Ascending aorta (tissue), 2 donors: ENCODE measurements at regions of chr2 and their contacts with region 1.

Region 1: GRCh38 chr2:235746257-235747084 is 252.6 kb downstream of the AGAP1 start:
- DNase-seq: peak in 1 of 2 donors; percentile 74
- H3K4me3 ChIP-seq: no peak overlapping the region
- H3K27ac ChIP-seq: no peak overlapping the region
- H3K4me1 ChIP-seq: no peaks in the 10 kb centered on the region
- H3K27me3 ChIP-seq: no peaks in the 10 kb centered on the region
- CTCF ChIP-seq: peak; percentile 74 to 80 (median 80)

Region 2: GRCh38 chr2:234544659-234545611 is 1201.5 kb before region 1 on chr2:
- intact Hi-C with region 1: loop called (anchors 10 kb)
- DNase-seq: peak in 1 of 2 donors; percentile 66
- H3K4me3 ChIP-seq: no peak overlapping the region
- H3K27ac ChIP-seq: no peak overlapping the region
- H3K4me1 ChIP-seq: peaks cover 0 to 2% of the 10 kb centered on the region in 2 donors
- H3K27me3 ChIP-seq: no peaks in the 10 kb centered on the region
- CTCF ChIP-seq: peak; percentile 60 to 87 (median 86)

Region 3: DNA sequence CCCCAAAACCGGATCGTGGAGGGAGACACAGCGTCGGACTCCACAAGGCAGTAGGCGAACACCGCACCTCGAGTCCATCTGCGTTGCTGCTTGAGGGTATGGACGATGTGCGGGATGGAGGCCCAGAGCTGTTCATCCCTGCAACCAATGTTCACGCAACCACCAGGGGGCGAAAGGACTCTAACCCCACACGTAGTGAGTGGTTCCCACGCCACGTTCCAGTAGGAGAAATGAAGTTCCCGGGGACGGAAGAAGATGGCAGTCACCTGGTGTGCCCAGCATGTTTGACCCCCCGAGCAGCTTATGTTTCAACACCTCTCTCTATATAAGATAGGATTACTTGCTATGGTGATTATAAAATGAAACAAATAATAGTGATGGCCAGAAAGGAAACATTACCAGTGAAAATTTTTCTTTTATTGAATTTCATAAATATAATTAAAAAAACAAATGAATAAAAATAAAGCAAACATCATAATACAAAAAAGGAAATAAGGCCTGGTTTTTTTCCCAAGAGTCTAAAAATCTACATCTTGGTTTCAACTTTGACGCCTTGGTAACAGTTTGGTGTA is 610.4 kb before region 1 on chr2:
- intact Hi-C with region 1: loop called (anchors 10 kb)
- DNase-seq: peak in 1 of 2 donors; percentile 69
- H3K4me3 ChIP-seq: no peak overlapping the region
- H3K27ac ChIP-seq: no peak overlapping the region
- H3K4me1 ChIP-seq: no peaks in the 10 kb centered on the region
- H3K27me3 ChIP-seq: no peaks in the 10 kb centered on the region
- CTCF ChIP-seq: peak in 2 of 3 experiments; percentile 14 to 49

Region 4: GRCh38 chr2:235255693-235256092 is 490.8 kb before region 1 on chr2:
- intact Hi-C with region 1: no loop called
- DNase-seq: no peak
- H3K4me3 ChIP-seq: no peak overlapping the region
- H3K27ac ChIP-seq: no peak overlapping the region
- H3K4me1 ChIP-seq: no peaks in the 10 kb centered on the region
- H3K27me3 ChIP-seq: no peaks in the 10 kb centered on the region
- CTCF ChIP-seq: no peak

Region 5: GRCh38 chr2:235669269-235669831 is 77.1 kb before region 1 on chr2:
- intact Hi-C with region 1: loop called (anchors 5 kb)
- DNase-seq: peak in 1 of 2 donors; percentile 71
- H3K4me3 ChIP-seq: peak overlapping the region; percentile 68 to 78
- H3K27ac ChIP-seq: no peak overlapping the region
- H3K4me1 ChIP-seq: peaks cover 9 to 10% of the 10 kb centered on the region in 2 donors
- H3K27me3 ChIP-seq: no peaks in the 10 kb centered on the region
- CTCF ChIP-seq: no peak

Region 6: DNA sequence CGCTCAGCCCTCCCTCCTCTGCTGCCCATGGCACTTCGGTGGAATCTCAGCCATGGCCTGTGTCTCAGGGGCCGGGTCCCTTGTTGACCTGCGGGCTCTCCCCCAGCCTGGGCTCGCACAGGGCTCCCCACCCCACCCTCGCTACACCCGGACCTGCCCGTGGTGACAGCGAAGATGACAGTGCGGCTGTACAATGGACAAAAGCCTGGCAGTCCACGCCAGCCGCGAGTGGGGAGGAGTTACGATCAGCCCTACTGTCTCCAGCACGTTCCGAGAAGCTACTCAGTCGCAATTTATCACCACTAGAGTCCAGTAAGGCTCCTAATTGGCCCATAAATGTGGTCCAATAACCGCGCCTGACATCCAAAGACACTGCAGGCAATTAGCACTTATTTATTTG is 390.1 kb after region 1 on chr2:
- intact Hi-C with region 1: no loop called
- DNase-seq: no peak
- H3K4me3 ChIP-seq: no peak overlapping the region
- H3K27ac ChIP-seq: no peak overlapping the region
- H3K4me1 ChIP-seq: no peaks in the 10 kb centered on the region
- H3K27me3 ChIP-seq: no peaks in the 10 kb centered on the region
- CTCF ChIP-seq: no peak

Region 7: DNA sequence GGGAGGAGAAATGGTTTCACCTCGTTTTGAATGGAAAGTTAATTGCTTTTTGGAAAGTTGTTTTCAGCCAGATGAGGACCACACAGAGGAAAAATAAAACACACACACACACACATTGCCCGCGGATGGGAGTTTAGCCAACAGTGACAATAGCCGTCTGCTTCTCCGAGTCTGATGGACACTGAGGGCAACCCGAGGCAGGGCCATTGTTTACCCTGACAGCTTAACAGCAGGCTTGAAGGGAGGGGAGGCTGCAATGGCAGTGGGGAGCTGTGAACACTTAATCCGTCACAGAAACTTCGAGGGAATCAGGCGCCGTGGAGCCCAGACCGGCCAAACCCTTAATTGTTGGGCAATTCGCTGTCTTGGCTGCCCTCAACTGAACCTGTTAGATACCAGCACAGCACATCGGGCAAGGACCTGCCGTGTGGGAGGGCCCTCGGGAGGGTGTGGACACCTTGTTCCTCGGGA is 969.1 kb after region 1 on chr2:
- intact Hi-C with region 1: no loop called
- DNase-seq: no peak
- H3K4me3 ChIP-seq: no peak overlapping the region
- H3K27ac ChIP-seq: no peak overlapping the region
- H3K4me1 ChIP-seq: peaks cover 0 to 8% of the 10 kb centered on the region in 2 donors
- H3K27me3 ChIP-seq: no peaks in the 10 kb centered on the region
- CTCF ChIP-seq: no peak